Gastrocnemius medialis (tissue), 4 donors: ENCODE measurements at regions of chr19 and their contacts with region 1.

Region 1: DNA sequence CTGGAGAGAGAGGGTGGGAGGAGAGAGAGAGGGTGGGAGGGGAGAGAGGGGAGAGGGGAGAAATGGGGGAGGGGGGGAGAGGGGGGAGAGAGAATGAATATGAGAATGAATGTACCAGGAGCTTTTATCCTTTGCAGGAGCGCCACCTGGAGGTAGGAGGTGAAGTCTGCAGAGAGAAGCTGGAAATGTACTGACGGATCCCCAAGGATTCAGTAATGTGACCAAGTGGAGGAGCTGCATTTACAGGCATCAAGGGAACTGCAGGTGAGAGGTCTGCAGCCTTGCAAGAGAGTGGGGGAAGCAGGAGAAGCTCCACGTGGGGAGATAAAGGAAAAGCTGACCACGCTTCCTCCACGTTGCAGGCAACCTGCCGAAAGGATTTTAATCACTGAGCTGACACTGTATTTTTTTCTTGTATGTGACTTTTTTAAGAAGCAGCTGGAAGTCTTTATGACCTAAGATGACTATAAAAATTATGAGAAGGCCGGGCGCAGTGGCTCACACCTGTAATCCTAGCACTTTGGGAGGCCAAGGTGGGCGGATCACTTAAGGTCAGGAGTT is 33.7 kb downstream of the VSTM1 start:
- DNase-seq: peak; percentile 8 to 23
- ATAC-seq: no peak
- H3K4me3 ChIP-seq: no peak overlapping the region
- H3K27ac ChIP-seq: no peak overlapping the region
- H3K4me1 ChIP-seq: no peaks in the 10 kb centered on the region
- H3K27me3 ChIP-seq: peaks cover 0 to 6% (median 4%) of the 10 kb centered on the region in 3 donors
- CTCF ChIP-seq: peak; percentile 6 to 54 (median 23)
- POLR2A ChIP-seq: no peak

Region 2: GRCh38 chr19:53792721-53793433 is 237.1 kb before region 1 on chr19:
- in situ Hi-C with region 1: loop called in 1 of 4 experiments (anchors 10 kb)
- intact Hi-C with region 1: no loop called
- DNase-seq: peak; percentile 29 to 30
- ATAC-seq: no peak
- H3K4me3 ChIP-seq: no peak overlapping the region
- H3K27ac ChIP-seq: no peak overlapping the region
- H3K4me1 ChIP-seq: no peaks in the 10 kb centered on the region
- H3K27me3 ChIP-seq: no peaks in the 10 kb centered on the region
- CTCF ChIP-seq: peak; percentile 61 to 87 (median 72)
- POLR2A ChIP-seq: no peak

Region 3: GRCh38 chr19:53844849-53845246 is 185.2 kb before region 1 on chr19:
- in situ Hi-C with region 1: loop called in 1 of 4 experiments (anchors 5 kb)
- intact Hi-C with region 1: loop called (anchors 2 kb)
- DNase-seq: no peak
- ATAC-seq: no peak
- H3K4me3 ChIP-seq: no peak overlapping the region
- H3K27ac ChIP-seq: no peak overlapping the region
- H3K4me1 ChIP-seq: no peaks in the 10 kb centered on the region
- H3K27me3 ChIP-seq: no peaks in the 10 kb centered on the region
- CTCF ChIP-seq: no peak
- POLR2A ChIP-seq: no peak

Region 4: DNA sequence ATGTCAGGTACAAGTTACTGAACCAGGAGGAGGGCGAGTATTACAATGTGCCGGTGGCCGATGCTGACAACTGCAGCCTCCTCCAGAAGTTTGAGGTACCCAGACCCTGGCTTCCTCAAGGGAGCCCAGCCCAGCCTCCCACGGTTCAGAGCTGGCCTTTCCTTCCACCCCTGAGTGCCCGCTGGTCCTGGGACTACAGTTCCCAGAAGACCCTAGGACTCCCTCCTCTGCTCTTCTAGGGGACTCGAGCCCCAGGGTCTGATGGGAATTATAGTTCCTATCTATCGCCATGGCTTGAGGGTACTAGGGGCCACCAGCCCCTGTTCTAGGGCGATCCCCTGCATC is 137.1 kb before region 1 on chr19:
- in situ Hi-C with region 1: no loop called
- intact Hi-C with region 1: no loop called
- DNase-seq: no peak
- ATAC-seq: no peak
- H3K4me3 ChIP-seq: no peak overlapping the region
- H3K27ac ChIP-seq: no peak overlapping the region
- H3K4me1 ChIP-seq: no peaks in the 10 kb centered on the region
- H3K27me3 ChIP-seq: peaks cover 22 to 37% (median 32%) of the 10 kb centered on the region in 3 donors
- CTCF ChIP-seq: no peak
- POLR2A ChIP-seq: no peak

Region 5: GRCh38 chr19:53906211-53907192 is 123.5 kb before region 1 on chr19:
- in situ Hi-C with region 1: loop called in 2 of 4 experiments (anchors 5 to 10 kb)
- intact Hi-C with region 1: no loop called
- DNase-seq: no peak
- ATAC-seq: no peak
- H3K4me3 ChIP-seq: peak overlapping the region in 1 of 4 donors; percentile 25
- H3K27ac ChIP-seq: no peak overlapping the region
- H3K4me1 ChIP-seq: peaks cover 0 to 3% of the 10 kb centered on the region in 2 donors
- H3K27me3 ChIP-seq: peaks cover 48 to 51% (median 50%) of the 10 kb centered on the region in 3 donors
- CTCF ChIP-seq: peak; percentile 46 to 94 (median 85)
- POLR2A ChIP-seq: no peak

Region 6: DNA sequence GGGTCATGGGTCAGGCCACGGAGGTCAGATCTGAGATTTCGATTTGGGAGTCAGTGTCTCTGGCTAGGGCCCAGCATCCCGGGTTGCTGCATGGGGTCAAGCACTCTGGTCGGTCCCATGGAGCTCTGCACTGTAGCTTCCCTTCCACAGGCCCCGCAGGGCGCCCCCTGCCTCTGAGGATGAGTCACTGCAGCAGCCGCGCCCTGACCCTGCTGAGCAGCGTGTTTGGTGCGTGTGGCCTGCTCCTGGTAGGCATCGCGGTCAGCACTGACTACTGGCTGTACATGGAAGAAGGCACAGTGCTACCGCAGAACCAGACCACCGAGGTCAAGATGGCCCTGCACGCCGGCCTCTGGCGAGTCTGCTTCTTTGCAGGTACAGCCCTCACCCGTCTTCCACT is 117.4 kb before region 1 on chr19:
- in situ Hi-C with region 1: loop called in 2 of 4 experiments (anchors 5 to 10 kb)
- intact Hi-C with region 1: no loop called
- DNase-seq: no peak
- ATAC-seq: no peak
- H3K4me3 ChIP-seq: no peak overlapping the region
- H3K27ac ChIP-seq: no peak overlapping the region
- H3K4me1 ChIP-seq: peaks cover 0 to 3% of the 10 kb centered on the region in 2 donors
- H3K27me3 ChIP-seq: peaks cover 53 to 54% (median 54%) of the 10 kb centered on the region in 3 donors
- CTCF ChIP-seq: no peak
- POLR2A ChIP-seq: no peak

Region 7: DNA sequence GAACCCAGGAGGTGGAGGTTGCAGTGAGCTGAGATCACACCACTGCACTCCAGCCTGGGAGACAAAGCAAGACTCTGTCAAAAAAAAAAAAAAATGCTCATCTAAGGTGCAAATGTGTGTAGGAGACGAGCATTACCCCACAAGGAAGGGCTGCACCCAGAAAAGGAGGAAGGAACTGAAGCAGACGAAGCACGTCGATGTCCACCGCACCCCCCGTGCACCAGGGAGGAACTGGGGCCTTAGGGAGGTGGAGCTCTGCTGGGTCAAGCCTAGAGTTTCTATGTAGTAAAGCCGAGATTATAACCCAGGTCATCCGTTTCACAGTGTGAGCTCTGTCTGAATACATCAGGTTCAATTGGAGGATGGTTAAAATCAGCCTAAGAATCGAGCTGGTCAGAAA is 32.6 kb after region 1 on chr19:
- in situ Hi-C with region 1: no loop called
- intact Hi-C with region 1: no loop called
- DNase-seq: no peak
- ATAC-seq: no peak
- H3K4me3 ChIP-seq: no peak overlapping the region
- H3K27ac ChIP-seq: no peak overlapping the region
- H3K4me1 ChIP-seq: no peaks in the 10 kb centered on the region
- H3K27me3 ChIP-seq: no peaks in the 10 kb centered on the region
- CTCF ChIP-seq: no peak
- POLR2A ChIP-seq: no peak

Region 8: DNA sequence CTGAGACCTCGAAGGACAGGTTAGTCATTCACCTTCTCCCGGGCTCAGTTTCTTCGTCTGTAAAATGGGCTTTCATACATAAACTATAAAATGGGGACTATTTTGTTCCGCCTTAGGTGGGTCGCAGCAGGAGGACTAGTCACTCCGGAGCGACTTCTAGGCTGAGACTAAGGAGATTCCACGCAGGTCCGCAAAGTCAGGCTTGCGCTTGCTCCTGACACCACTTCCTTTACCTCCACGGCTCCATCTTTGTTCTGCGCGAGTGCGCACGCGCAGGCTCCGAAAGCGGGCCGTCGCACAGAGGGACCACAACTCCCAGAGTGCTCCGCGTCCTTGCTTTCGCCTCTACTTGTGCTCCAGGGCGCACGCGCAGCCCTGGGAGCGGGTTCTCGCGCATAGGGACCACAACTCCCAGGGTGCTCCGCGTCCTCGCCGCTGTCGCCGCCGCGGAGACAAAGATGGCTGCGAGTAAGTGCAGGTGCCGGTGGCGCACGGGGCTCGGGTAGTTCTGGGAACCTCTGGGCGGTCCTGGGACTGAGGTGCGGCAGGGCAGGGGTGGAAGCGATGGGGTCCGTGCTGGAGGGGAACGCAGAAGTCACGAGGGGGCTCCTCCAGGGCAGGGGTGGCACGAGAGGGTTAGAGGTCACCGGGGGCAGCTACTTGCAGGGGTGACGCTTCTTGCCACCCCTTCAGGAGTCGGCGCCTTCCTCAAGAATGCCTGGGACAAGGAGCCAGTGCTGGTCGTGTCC is 72.6 kb after region 1 on chr19 and contains the start of gene NDUFA3:
- in situ Hi-C with region 1: no loop called
- intact Hi-C with region 1: no loop called
- DNase-seq: peak; percentile 95 to 98
- ATAC-seq: peak; percentile 99
- H3K4me3 ChIP-seq: peak within 1 kb of the TSS; percentile 78 to 94 (median 90)
- H3K27ac ChIP-seq: peak within 1 kb of the TSS; percentile 83 to 95 (median 89)
- H3K4me1 ChIP-seq: peaks cover 10% of the 10 kb centered on the region in 2 donors
- H3K27me3 ChIP-seq: peaks cover 0 to 7% (median 0%) of the 10 kb centered on the region in 3 donors
- CTCF ChIP-seq: no peak
- POLR2A ChIP-seq: peak; percentile 71 to 91
- total RNA-seq, gene NDUFA3: 29.5 to 84.9 (median 60.6) TPM